OCI-LY7 (cell line): ENCODE measurements at regions of chr3 and their contacts with region 1.

Region 1: DNA sequence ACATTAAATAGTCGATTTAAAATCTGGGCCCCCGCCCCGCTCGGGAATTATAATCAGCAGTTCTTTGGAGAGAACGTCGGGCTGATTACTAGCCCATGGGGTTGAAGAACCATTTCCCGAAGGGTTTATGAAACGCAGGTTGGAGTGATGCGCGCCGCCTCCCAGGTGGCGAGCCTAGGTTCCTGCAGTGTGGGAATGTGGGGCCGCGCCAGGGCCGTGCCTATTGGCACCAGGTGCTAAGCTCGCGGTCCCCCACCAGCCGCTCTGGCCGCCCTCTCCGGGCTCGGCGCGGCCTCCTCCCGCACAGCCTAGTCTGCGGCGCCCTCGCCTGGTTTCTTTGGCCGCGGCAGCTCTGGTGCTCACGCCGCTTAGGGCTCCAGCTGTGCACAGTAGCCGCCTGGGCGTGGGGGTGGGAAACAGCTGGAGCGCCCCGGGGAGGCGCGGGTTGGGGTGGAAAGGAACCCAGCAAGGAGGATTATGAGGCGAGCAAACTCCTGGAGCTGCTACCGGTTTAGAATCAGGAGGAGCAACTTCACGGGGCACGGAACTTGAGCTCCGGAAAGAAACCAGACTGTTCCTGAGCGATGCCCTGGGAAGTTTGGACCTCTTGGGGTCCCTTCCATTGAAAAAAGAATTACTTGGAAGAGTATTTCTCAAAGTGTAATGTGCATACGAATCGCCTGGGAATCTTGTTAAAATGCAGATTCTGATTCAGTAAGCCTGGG is 5.6 kb upstream of the MECOM start:
- DNase-seq: no peak
- H3K4me3 ChIP-seq: no peak overlapping the region
- H3K27ac ChIP-seq: no peak overlapping the region
- H3K4me1 ChIP-seq: no peaks in the 10 kb centered on the region
- CTCF ChIP-seq: peak; percentile 58

Region 2: GRCh38 chr3:169149349-169149890 is 519.7 kb before region 1 on chr3:
- CTCF ChIA-PET with region 1: no interaction called
- POLR2A ChIA-PET with region 1: no interaction called
- intact Hi-C with region 1: loop called (anchors 10 kb)
- DNase-seq: peak; percentile 82
- H3K4me3 ChIP-seq: peak overlapping the region; percentile 27
- H3K27ac ChIP-seq: no peak overlapping the region
- H3K4me1 ChIP-seq: no peaks in the 10 kb centered on the region
- CTCF ChIP-seq: peak; percentile 84